ENCODE measurements at regions of chr20 and their contacts with region 1.

Region 1: DNA sequence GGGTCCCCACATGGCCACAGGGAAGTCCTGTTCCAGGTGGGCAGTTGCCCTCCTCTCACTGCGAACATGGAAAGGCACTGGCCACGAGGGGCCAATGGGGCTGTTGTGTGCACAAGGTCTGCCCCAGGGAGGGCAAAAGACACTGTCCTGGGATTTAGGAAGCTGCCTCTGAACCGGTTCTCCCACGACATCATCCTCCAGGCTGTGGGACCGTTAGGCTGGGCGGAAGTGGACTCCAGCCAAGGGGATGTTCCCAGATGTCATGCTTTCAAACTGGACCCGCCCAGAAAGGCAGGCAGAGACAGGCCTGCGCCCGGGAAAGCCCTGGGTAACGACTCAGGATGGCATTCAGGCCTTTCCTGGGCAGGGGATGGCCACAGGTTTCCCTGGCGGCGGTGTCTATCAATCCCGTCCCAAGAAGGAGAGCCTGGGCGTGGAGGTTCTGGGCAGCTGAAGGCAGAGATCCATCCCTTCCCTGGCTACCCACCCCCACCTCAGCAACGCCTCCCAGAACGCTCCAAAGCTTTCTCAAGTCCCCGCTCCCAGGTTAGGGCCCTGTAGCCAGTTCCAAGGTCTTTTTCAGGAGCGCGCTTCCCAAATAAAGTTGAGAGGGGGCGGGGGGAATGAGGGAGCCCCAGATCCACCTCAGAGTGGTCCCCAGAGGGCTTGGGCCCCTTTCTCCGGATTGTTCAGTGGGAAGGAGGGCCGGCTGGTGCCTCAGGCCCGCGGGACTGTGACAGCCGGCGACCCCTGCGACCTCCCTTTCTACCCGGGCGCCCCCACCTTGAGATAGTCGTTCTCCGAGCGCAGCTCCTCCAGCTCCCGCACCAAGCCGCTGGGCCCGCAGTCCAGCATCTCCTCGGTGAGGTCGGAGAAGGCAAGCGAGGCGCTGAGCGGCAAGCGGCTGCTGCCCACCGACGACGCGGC is 13.8 kb upstream of the TLDC2 start:
- DNase-seq: peak; percentile 89 to 94 (median 91)
- ATAC-seq: peak; percentile 59 to 80 (median 68)
- H3K4me3 ChIP-seq: peak overlapping the region; percentile 13 to 87 (median 68)
- H3K27ac ChIP-seq: peak overlapping the region; percentile 85 to 97 (median 92)
- H3K4me1 ChIP-seq: peaks cover 9 to 70% (median 47%) of the 10 kb centered on the region in 12 donors
- H3K27me3 ChIP-seq: no peaks in the 10 kb centered on the region
- CTCF ChIP-seq: no peak
- POLR2A ChIP-seq: peak in 1 of 2 donors; percentile 65

Region 2: GRCh38 chr20:36541227-36541763 is 320.8 kb before region 1 on chr20 and contains the start of gene MYL9:
- intact Hi-C with region 1: loop called in 1 of 10 experiments (anchors 10 kb)
- DNase-seq: peak; percentile 95 to 98 (median 96)
- ATAC-seq: peak; percentile 66 to 88 (median 81)
- H3K4me3 ChIP-seq: peak within 1 kb of the TSS; percentile 71 to 100 (median 92)
- H3K27ac ChIP-seq: peak within 1 kb of the TSS; percentile 88 to 100 (median 98)
- H3K4me1 ChIP-seq: peaks cover 5 to 74% (median 52%) of the 10 kb centered on the region in 12 donors
- H3K27me3 ChIP-seq: no peaks in the 10 kb centered on the region
- CTCF ChIP-seq: no peak
- POLR2A ChIP-seq: peak in 1 of 2 donors; percentile 62
- total RNA-seq, gene MYL9: 521 to 2,387 (median 1,751) TPM

Region 3: DNA sequence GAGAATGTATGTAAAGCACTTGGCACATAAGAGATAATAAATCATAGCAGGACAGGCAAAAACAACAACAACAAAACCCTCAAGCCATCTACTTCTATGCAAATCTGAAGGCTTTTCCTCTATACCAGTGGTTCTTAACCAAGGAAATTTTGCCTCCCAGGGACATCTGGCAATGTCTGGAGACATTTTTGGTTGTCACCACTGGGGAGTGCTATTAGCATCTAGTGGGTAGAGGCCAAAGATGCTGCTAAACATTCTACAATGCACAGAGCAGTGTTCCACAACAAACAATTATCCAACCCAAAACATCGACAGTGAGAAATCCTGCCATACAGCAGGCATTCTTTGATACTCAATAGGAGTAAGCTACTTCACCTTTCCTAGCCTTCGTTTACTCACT is 144.5 kb before region 1 on chr20:
- intact Hi-C with region 1: loop called in 1 of 10 experiments (anchors 10 kb)
- DNase-seq: no peak
- ATAC-seq: peak in 2 of 4 donors; percentile 58 to 59
- H3K4me3 ChIP-seq: no peak overlapping the region
- H3K27ac ChIP-seq: no peak overlapping the region
- H3K4me1 ChIP-seq: peaks cover 0 to 22% (median 0%) of the 10 kb centered on the region in 12 donors
- H3K27me3 ChIP-seq: no peaks in the 10 kb centered on the region
- CTCF ChIP-seq: peak in 10 of 12 donors; percentile 6 to 58 (median 40)
- POLR2A ChIP-seq: no peak

Region 4: DNA sequence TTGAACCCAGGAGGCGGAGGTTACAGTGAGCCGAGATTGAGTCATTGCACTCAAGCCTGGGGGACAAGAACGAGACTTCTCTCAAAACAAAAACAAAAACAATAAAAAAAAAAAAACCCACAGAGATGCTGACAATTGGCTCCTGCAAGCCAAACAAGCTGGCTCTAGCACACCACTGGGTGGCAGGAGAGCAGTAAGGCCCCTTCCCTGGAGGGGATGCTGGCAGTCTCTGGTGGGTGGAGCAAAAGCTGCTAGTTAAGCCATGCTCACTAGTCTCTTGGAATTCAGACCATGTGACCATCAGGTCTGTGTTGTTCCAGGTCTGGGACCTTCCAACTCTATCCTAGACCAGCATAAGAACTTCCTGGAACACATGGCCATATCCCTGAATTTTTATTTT is 69.7 kb before region 1 on chr20:
- intact Hi-C with region 1: loop called in 5 of 10 experiments (anchors 5 to 10 kb)
- DNase-seq: peak in 4 of 5 donors; percentile 41 to 66 (median 65)
- ATAC-seq: peak; percentile 37 to 72 (median 66)
- H3K4me3 ChIP-seq: no peak overlapping the region
- H3K27ac ChIP-seq: no peak overlapping the region
- H3K4me1 ChIP-seq: peaks cover 0 to 17% (median 2%) of the 10 kb centered on the region in 12 donors
- H3K27me3 ChIP-seq: no peaks in the 10 kb centered on the region
- CTCF ChIP-seq: peak in 11 of 12 donors; percentile 7 to 59 (median 44)
- POLR2A ChIP-seq: no peak

Region 5: GRCh38 chr20:36827474-36827873 is 34.7 kb before region 1 on chr20:
- intact Hi-C with region 1: loop called in 6 of 10 experiments (anchors 2 to 5 kb)
- DNase-seq: no peak
- ATAC-seq: no peak
- H3K4me3 ChIP-seq: no peak overlapping the region
- H3K27ac ChIP-seq: peak overlapping the region in 8 of 12 donors; percentile 41 to 91 (median 72)
- H3K4me1 ChIP-seq: peaks cover 11 to 65% (median 44%) of the 10 kb centered on the region in 12 donors
- H3K27me3 ChIP-seq: no peaks in the 10 kb centered on the region
- CTCF ChIP-seq: no peak
- POLR2A ChIP-seq: no peak

Region 6: GRCh38 chr20:36941401-36941835 is 79.3 kb after region 1 on chr20:
- intact Hi-C with region 1: no loop called
- DNase-seq: peak in 1 of 5 donors; percentile 41
- ATAC-seq: no peak
- H3K4me3 ChIP-seq: no peak overlapping the region
- H3K27ac ChIP-seq: peak overlapping the region in 9 of 12 donors; percentile 1 to 76 (median 15)
- H3K4me1 ChIP-seq: peaks cover 10 to 98% (median 35%) of the 10 kb centered on the region in 12 donors
- H3K27me3 ChIP-seq: no peaks in the 10 kb centered on the region
- CTCF ChIP-seq: no peak
- POLR2A ChIP-seq: no peak

Region 7: DNA sequence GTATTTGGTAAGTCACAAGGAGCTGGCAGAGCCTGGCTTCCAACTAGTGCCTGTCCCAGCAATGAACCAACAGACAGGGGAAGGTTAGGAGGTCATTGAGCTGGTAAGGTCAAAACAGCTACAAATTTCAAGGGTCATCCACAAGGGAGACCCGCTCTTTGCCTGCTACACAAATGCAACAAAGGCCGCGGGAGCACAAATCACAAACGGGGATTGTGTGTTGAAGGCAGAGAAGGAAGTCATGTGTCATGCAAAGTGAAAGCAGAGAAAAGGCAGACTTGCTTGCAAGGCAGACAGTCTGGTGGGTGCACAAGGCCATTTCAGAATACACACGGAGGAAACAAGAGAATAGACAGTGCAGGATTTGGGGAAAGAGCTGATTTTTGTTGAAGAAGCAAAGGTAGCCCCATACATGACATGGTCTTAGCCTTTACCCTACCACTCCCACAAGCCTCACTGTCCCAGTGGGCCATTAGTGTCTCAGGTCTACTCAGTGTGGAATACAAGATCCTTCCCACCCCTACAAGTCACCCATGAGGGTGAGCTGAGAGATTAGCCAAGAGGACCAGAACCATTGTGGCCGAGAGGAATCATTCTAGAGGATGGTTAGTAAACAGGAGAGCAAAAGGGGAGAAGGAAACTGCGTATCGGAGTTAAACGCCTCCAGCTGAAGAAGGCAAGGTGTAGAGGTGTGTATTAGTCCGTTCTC is 107.5 kb after region 1 on chr20:
- intact Hi-C with region 1: no loop called
- DNase-seq: no peak
- ATAC-seq: peak in 2 of 4 donors; percentile 36 to 63
- H3K4me3 ChIP-seq: no peak overlapping the region
- H3K27ac ChIP-seq: peak overlapping the region in 3 of 12 donors; percentile 4 to 87 (median 34)
- H3K4me1 ChIP-seq: peaks cover 0 to 31% (median 0%) of the 10 kb centered on the region in 12 donors
- H3K27me3 ChIP-seq: no peaks in the 10 kb centered on the region
- CTCF ChIP-seq: no peak
- POLR2A ChIP-seq: no peak

Measured in heart left ventricle (tissue), 16 donors.